ENCODE measurements at regions of chr1 and their contacts with region 1.

Region 1: GRCh38 chr1:3453203-3453761 is 1.2 kb upstream of the ARHGEF16 start:
- DNase-seq: peak; percentile 84 to 89
- H3K4me3 ChIP-seq: no peak overlapping the region
- H3K4me3 Mint-ChIP-seq: peak overlapping the region; percentile 62
- H3K27ac Mint-ChIP-seq: no peak overlapping the region
- H3K4me1 ChIP-seq: peaks cover 47% of the 10 kb centered on the region
- H3K4me1 Mint-ChIP-seq: peaks cover 7% of the 10 kb centered on the region
- H3K27me3 ChIP-seq: no peaks in the 10 kb centered on the region
- H3K27me3 Mint-ChIP-seq: no peaks in the 10 kb centered on the region
- CTCF ChIP-seq: peak; percentile 88 to 89

Region 2: DNA sequence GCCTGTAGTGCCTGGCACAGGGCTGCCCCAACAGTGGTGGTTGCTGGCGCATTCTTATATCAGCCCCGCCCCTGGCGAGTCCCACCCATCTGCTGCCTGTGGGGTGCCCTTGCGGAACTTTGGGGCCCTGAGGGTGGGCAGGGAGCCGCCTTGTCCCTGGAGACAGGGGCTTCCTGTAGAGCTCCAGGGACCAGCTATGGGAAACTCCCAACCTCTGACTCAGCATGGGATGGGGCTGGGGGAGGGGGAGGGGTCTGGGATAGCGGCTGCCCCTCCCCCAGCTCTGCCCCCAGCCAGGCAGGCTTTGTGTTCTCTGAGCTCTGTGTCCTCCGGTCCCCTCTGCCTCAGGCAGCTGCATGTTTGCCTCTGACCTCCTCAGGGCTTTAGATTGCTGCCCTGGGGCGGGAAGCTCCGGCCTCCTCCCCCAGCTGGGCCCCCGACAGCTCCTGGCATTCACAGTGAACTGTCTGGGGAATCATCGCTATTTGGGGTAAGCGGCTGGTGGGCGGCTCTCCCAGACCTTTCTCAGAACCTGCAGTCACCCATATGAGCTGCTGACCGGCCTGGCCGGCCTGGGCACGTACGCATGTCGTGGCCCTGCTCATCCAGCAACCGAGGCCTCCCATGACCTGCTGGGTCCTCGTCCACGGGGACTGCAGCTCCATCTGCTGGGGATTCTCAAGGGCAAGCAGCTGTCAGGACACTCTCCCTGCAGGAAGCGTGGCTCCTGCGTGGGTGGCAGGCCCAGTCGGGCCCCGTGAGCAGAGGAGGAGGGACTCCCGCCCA is 18.2 kb after region 1 on chr1:
- CTCF ChIA-PET with region 1: interaction called, 173 read pairs
- POLR2A ChIA-PET with region 1: interaction called, 31 read pairs
- intact Hi-C with region 1: loop called (anchors 1 kb)
- DNase-seq: peak; percentile 82 to 88
- H3K4me3 ChIP-seq: no peak overlapping the region
- H3K4me3 Mint-ChIP-seq: no peak overlapping the region
- H3K27ac Mint-ChIP-seq: peak overlapping the region; percentile 95
- H3K4me1 ChIP-seq: peaks cover 18% of the 10 kb centered on the region
- H3K4me1 Mint-ChIP-seq: peaks cover 10% of the 10 kb centered on the region
- H3K27me3 ChIP-seq: no peaks in the 10 kb centered on the region
- H3K27me3 Mint-ChIP-seq: no peaks in the 10 kb centered on the region
- CTCF ChIP-seq: peak; percentile 58 to 71

Region 3: GRCh38 chr1:3483801-3484444 is 30.6 kb after region 1 on chr1:
- CTCF ChIA-PET with region 1: interaction called, 11 read pairs
- POLR2A ChIA-PET with region 1: interaction called, 3 read pairs
- intact Hi-C with region 1: loop called (anchors 2 kb)
- DNase-seq: peak; percentile 69 to 71
- H3K4me3 ChIP-seq: no peak overlapping the region
- H3K4me3 Mint-ChIP-seq: no peak overlapping the region
- H3K27ac Mint-ChIP-seq: no peak overlapping the region
- H3K4me1 ChIP-seq: 0 out of 2 replicates have a peak, but pooled peaks cover 3% of the 10 kb centered on the region
- H3K4me1 Mint-ChIP-seq: no peaks in the 10 kb centered on the region
- H3K27me3 ChIP-seq: no peaks in the 10 kb centered on the region
- H3K27me3 Mint-ChIP-seq: no peaks in the 10 kb centered on the region
- CTCF ChIP-seq: peak; percentile 60 to 70

Region 4: DNA sequence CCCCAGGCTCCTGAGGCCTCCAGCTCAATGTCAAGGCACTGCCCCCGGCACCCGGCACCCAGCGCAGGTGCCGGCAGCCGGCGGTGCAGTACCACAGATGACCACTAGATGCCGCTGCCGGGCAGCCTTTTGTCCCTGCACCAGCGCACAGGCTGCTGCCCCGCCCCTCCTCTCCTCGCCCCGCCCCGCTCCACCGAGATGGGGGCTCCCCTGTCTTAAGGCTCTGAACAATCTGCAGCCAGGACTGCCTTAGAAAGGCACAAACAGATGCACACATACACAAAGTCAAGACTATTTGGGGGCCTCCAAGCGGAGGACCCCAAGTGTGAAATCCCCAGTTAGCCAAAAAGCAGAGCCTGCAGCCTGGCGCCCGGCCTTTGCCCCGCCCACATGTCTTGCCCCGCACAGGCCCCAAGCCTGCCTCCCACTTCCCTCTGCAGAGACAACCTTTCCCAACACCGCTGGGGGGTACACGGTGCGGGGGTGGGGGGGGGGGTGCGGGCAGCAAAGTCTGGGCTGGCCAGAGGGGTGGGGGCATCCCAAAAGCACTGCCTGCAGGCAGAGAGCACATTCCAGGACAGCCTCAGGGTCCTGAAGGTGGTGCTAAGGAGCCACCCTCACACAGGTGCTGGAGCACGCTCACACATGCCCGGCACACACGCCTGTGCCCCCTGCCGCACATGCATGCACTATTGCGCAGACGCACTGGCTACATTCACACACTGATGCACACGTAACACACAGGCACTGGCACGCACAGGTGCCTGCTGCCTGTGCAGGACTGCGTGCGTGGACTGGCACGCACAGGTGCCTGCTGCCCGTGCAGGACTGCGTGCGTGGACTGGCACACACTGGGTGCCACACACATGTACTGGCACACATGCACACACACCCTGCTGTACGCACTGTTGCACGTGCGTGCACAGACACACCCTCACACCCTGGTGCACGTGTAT is 38.3 kb after region 1 on chr1:
- CTCF ChIA-PET with region 1: interaction called, 22 read pairs
- POLR2A ChIA-PET with region 1: no interaction called
- intact Hi-C with region 1: no loop called
- DNase-seq: peak; percentile 69 to 80
- H3K4me3 ChIP-seq: no peak overlapping the region
- H3K4me3 Mint-ChIP-seq: peak overlapping the region; percentile 65
- H3K27ac Mint-ChIP-seq: no peak overlapping the region
- H3K4me1 ChIP-seq: no peaks in the 10 kb centered on the region
- H3K4me1 Mint-ChIP-seq: no peaks in the 10 kb centered on the region
- H3K27me3 ChIP-seq: no peaks in the 10 kb centered on the region
- H3K27me3 Mint-ChIP-seq: no peaks in the 10 kb centered on the region
- CTCF ChIP-seq: peak; percentile 87 to 97

Region 5: DNA sequence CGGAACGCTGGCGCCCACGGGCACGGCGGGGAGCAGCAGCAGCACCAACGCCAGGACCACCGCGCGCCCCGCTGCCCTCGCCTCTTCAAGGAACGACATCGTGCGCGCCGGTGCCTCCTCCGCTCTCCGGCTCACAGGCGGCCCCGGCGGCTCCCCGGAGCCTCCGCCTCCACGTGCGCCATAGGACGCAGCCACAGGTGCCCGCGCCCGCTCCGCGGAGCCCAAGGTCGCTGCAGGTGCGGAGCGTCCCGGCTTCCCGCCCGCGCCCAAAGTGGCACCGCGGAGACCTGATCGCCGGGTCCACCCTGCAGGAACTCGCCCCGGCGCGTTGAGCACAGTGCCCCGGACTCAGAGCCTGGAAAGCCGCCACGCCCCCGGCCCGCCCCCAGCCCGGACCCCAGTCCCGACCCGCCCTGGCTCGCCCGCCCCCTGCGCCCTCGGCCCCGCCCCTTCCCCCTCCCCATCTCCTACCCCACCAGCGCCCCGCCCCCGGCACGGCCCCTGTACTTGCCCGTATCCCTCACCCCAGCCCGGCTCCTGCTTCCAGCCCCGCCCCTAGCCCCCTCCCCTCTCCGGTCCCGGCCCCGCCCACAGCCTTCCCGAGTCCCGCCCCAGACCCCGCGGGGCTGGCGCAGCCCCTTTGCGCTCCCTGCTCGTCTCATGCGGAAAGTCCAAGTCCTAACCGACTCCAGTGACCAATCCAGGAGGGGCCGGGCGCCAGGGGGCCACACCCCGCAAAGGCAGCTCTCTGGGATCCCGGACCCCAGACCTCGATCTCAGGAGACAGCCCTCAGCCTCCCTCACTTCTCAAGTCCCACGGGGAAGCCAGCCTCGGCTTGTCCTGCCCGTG is 158.1 kb after region 1 on chr1 and contains the start of gene MEGF6:
- CTCF ChIA-PET with region 1: no interaction called
- POLR2A ChIA-PET with region 1: no interaction called
- intact Hi-C with region 1: no loop called
- DNase-seq: peak; percentile 92 to 94
- H3K4me3 ChIP-seq: peak within 1 kb of the TSS; percentile 65
- H3K4me3 Mint-ChIP-seq: peak within 1 kb of the TSS; percentile 74
- H3K27ac Mint-ChIP-seq: peak within 1 kb of the TSS; percentile 61
- H3K4me1 ChIP-seq: peaks cover 39% of the 10 kb centered on the region
- H3K4me1 Mint-ChIP-seq: peaks cover 27% of the 10 kb centered on the region
- H3K27me3 ChIP-seq: no peaks in the 10 kb centered on the region
- H3K27me3 Mint-ChIP-seq: no peaks in the 10 kb centered on the region
- CTCF ChIP-seq: no peak
- total RNA-seq, gene MEGF6: 12.1 and 13.3 TPM in 2 replicates

Region 6: GRCh38 chr1:3740042-3740441 is 286.8 kb after region 1 on chr1:
- CTCF ChIA-PET with region 1: no interaction called
- POLR2A ChIA-PET with region 1: no interaction called
- intact Hi-C with region 1: no loop called
- DNase-seq: no peak
- H3K4me3 ChIP-seq: no peak overlapping the region
- H3K4me3 Mint-ChIP-seq: no peak overlapping the region
- H3K27ac Mint-ChIP-seq: no peak overlapping the region
- H3K4me1 ChIP-seq: no peaks in the 10 kb centered on the region
- H3K4me1 Mint-ChIP-seq: no peaks in the 10 kb centered on the region
- H3K27me3 ChIP-seq: no peaks in the 10 kb centered on the region
- H3K27me3 Mint-ChIP-seq: no peaks in the 10 kb centered on the region
- CTCF ChIP-seq: no peak

Region 7: GRCh38 chr1:4083231-4084047 is 630.2 kb after region 1 on chr1:
- CTCF ChIA-PET with region 1: no interaction called
- POLR2A ChIA-PET with region 1: no interaction called
- intact Hi-C with region 1: no loop called
- DNase-seq: no peak
- H3K4me3 ChIP-seq: no peak overlapping the region
- H3K4me3 Mint-ChIP-seq: no peak overlapping the region
- H3K27ac Mint-ChIP-seq: no peak overlapping the region
- H3K4me1 ChIP-seq: no peaks in the 10 kb centered on the region
- H3K4me1 Mint-ChIP-seq: no peaks in the 10 kb centered on the region
- H3K27me3 ChIP-seq: no peaks in the 10 kb centered on the region
- H3K27me3 Mint-ChIP-seq: peaks cover 13% of the 10 kb centered on the region
- CTCF ChIP-seq: no peak